Activated T-helper 2 cell treated with anti-CD3 and anti-CD28 coated beads, Interferon-gamma antibody, Interleukin-2, Interleukin-4, amounts not matched to agents 10 μg/mL and 5 μg/mL and 100 μg/mL, durations not matched to agents 14 hours and 24 hours and 36 hours (primary cell): ENCODE measurements at regions of chr6 and their contacts with region 1.

Region 1: DNA sequence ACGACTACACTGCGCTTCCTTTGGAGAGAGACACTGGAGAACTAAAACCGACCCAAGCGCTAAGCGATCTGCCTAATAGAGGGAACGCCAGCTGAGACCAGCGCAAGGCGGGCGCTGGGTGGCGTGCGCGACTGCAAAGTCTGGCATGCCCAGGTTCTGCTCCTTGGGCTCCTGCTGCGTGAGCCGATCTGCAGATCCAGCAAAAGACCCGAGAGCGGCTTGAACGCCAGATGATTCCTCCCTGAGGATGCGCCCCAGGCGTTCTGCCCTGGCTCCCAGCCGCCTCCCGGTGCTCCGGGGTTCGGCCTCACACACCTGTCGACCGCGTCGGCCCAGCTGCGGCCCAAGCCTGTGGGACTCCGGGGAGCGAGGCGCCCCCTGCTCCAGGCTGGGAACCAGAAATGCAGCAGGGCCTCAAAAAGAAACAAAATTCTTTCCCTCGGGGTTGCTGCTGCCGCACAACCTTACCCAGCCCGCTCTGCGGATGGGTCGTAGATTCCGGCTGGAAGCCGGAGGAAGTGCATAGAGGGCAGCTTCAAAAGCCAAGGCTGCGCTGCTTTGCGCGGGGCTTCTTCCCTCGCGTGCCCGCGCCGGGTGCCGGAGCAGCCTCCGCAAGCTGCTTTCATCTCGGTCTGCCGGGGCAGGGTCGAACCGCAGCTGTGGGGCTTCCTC is 17.9 kb upstream of the PRDM13 start:
- DNase-seq: peak; percentile 41
- H3K4me3 Mint-ChIP-seq: peak overlapping the region; percentile 81
- H3K27ac Mint-ChIP-seq: no peak overlapping the region
- H3K4me1 Mint-ChIP-seq: peaks cover 18% of the 10 kb centered on the region
- H3K27me3 Mint-ChIP-seq: peaks cover 70% of the 10 kb centered on the region

Region 2: GRCh38 chr6:99330159-99330558 is 258.6 kb before region 1 on chr6:
- intact Hi-C with region 1: loop called (anchors 10 kb)
- DNase-seq: peak; percentile 40
- H3K4me3 Mint-ChIP-seq: no peak overlapping the region
- H3K27ac Mint-ChIP-seq: no peak overlapping the region
- H3K4me1 Mint-ChIP-seq: peaks cover 5% of the 10 kb centered on the region
- H3K27me3 Mint-ChIP-seq: peaks cover 2% of the 10 kb centered on the region

Region 3: DNA sequence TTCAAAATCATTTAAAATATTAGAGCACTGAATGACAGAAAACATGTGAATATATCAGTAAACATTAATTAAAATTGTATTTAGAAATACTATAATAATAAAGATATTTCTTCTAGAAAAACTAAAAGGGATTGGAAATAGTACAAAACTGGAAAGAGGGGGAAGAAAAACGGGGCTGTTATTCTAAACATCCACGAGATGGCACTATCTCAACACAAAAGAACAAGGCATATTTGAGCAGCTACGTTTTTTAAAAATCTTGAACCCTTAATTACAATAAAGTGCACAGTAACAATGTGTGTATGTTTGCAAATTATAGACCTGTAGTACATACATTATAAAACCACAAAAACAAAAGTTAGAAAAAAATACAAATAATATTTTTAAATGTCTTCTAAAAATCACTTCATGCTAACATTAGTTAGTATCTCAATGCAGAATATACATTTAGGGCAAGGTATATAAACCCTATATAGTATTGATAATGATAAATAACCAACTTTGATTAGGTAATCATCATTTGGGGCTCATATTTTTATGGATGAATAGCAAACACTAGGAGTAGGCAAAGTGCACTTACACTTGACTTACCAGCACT is 121.1 kb before region 1 on chr6:
- intact Hi-C with region 1: loop called (anchors 5 kb)
- DNase-seq: no peak
- H3K4me3 Mint-ChIP-seq: no peak overlapping the region
- H3K27ac Mint-ChIP-seq: no peak overlapping the region
- H3K4me1 Mint-ChIP-seq: no peaks in the 10 kb centered on the region
- H3K27me3 Mint-ChIP-seq: no peaks in the 10 kb centered on the region

Region 4: GRCh38 chr6:99603421-99604165 is 14.8 kb after region 1 on chr6:
- intact Hi-C with region 1: loop called (anchors 1 kb)
- DNase-seq: no peak
- H3K4me3 Mint-ChIP-seq: peak overlapping the region; percentile 42
- H3K27ac Mint-ChIP-seq: no peak overlapping the region
- H3K4me1 Mint-ChIP-seq: peaks cover 23% of the 10 kb centered on the region
- H3K27me3 Mint-ChIP-seq: peaks cover 87% of the 10 kb centered on the region

Region 5: DNA sequence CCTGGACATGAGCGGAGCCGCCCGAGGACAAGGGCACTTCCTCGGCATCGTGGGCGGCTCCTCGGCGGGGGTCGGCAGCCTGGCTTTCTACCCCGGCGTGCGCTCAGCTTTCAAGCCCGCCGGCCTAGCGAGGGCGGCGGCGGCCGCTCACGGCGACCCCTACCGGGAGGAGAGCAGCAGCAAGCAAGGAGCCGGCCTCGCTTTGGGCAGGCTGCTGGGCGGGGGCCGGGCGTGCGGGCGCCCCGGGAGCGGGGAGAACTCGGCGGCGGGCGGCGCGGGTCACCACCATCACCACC is 24.6 kb after region 1 on chr6:
- intact Hi-C with region 1: loop called (anchors 2 kb)
- DNase-seq: no peak
- H3K4me3 Mint-ChIP-seq: no peak overlapping the region
- H3K27ac Mint-ChIP-seq: no peak overlapping the region
- H3K4me1 Mint-ChIP-seq: peaks cover 28% of the 10 kb centered on the region
- H3K27me3 Mint-ChIP-seq: peaks cover 75% of the 10 kb centered on the region

Region 6: GRCh38 chr6:99746261-99746895 is 157.6 kb after region 1 on chr6:
- intact Hi-C with region 1: loop called (anchors 1 kb)
- DNase-seq: peak; percentile 28
- H3K4me3 Mint-ChIP-seq: no peak overlapping the region
- H3K27ac Mint-ChIP-seq: no peak overlapping the region
- H3K4me1 Mint-ChIP-seq: no peaks in the 10 kb centered on the region
- H3K27me3 Mint-ChIP-seq: peaks cover 25% of the 10 kb centered on the region

Region 7: GRCh38 chr6:99822741-99823512 is 234.2 kb after region 1 on chr6:
- intact Hi-C with region 1: loop called (anchors 2 kb)
- DNase-seq: no peak
- H3K4me3 Mint-ChIP-seq: peak overlapping the region; percentile 49
- H3K27ac Mint-ChIP-seq: no peak overlapping the region
- H3K4me1 Mint-ChIP-seq: peaks cover 1% of the 10 kb centered on the region
- H3K27me3 Mint-ChIP-seq: peaks cover 12% of the 10 kb centered on the region